Endothelial cell of umbilical vein (primary cell): ENCODE measurements at regions of chr9 and their contacts with region 1.

Region 1: GRCh38 chr9:4792572-4793458 is at the start of gene RCL1:
- DNase-seq: peak; percentile 98
- H3K4me3 ChIP-seq: peak within 1 kb of the TSS; percentile 92 to 94 (median 94)
- H3K27ac ChIP-seq: peak within 1 kb of the TSS; percentile 75
- H3K4me1 ChIP-seq: peaks cover 19% of the 10 kb centered on the region
- H3K27me3 ChIP-seq: peaks cover 0 to 3% of the 10 kb centered on the region in 2 experiments
- CTCF ChIP-seq: no peak
- POLR2A ChIP-seq: peak; percentile 60
- total RNA-seq, gene RCL1: 12.1 and 13.2 TPM in 2 replicates

Region 2: DNA sequence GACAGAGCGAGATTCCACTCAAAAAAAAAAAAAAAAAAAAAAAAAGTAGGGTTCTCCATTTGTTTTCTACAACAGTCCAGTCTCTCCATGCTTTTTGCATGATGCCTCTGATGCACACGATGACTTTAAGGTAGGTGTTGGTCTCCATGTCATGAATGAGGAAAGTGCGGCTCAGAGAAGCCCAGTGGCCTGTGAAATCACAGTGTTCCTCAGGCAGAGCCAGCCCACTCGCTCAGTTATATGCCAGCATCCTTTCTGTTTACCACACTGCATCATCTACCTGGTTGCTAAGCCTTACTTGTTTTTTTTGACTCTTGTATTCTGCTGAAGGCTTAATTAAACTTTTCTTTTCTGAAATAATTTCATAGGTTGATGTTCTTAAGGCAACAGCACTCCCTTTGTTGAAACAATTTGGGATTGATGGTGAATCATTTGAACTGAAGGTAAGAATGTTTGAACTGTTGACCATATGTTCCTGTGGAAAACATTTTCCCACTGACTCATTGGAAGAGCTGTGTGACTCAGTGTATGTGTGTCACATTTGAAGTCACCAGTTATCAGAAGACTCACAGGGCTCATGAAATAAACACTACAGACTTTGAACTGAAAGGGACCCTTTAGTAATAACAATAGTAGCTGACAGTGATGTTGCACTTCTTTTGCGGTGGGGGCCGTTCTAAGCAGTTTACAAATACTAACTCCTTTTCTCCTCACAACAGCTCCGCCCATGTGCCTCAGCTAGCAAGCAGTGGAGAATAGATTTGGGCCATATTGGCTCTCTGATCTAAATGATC is 40.2 kb after region 1 on chr9:
- CTCF ChIA-PET with region 1: interaction called, 4 read pairs
- POLR2A ChIA-PET with region 1: interaction called, 3 read pairs
- dilution Hi-C with region 1: no loop called
- intact Hi-C with region 1: loop called (anchors 1 kb)
- DNase-seq: peak; percentile 98
- H3K4me3 ChIP-seq: peak overlapping the region in 1 of 3 experiments; percentile 44
- H3K27ac ChIP-seq: peak overlapping the region; percentile 99
- H3K4me1 ChIP-seq: peaks cover 46% of the 10 kb centered on the region
- H3K27me3 ChIP-seq: no peaks in the 10 kb centered on the region
- CTCF ChIP-seq: no peak
- POLR2A ChIP-seq: peak; percentile 41

Region 3: GRCh38 chr9:4862506-4863250 is 69.9 kb after region 1 on chr9:
- CTCF ChIA-PET with region 1: no interaction called
- POLR2A ChIA-PET with region 1: no interaction called
- dilution Hi-C with region 1: no loop called
- intact Hi-C with region 1: no loop called
- DNase-seq: no peak
- H3K4me3 ChIP-seq: no peak overlapping the region
- H3K27ac ChIP-seq: no peak overlapping the region
- H3K4me1 ChIP-seq: peaks cover 6% of the 10 kb centered on the region
- H3K27me3 ChIP-seq: no peaks in the 10 kb centered on the region
- CTCF ChIP-seq: no peak
- POLR2A ChIP-seq: no peak

Region 4: GRCh38 chr9:4904322-4905134 is 111.7 kb after region 1 on chr9:
- CTCF ChIA-PET with region 1: no interaction called
- POLR2A ChIA-PET with region 1: no interaction called
- dilution Hi-C with region 1: no loop called
- intact Hi-C with region 1: no loop called
- DNase-seq: peak; percentile 30
- H3K4me3 ChIP-seq: no peak overlapping the region
- H3K27ac ChIP-seq: no peak overlapping the region
- H3K4me1 ChIP-seq: peaks cover 4% of the 10 kb centered on the region
- H3K27me3 ChIP-seq: no peaks in the 10 kb centered on the region
- CTCF ChIP-seq: no peak
- POLR2A ChIP-seq: no peak